Prostate gland (tissue), 2 donors: ENCODE measurements at regions of chrX and their contacts with region 1.

Region 1: DNA sequence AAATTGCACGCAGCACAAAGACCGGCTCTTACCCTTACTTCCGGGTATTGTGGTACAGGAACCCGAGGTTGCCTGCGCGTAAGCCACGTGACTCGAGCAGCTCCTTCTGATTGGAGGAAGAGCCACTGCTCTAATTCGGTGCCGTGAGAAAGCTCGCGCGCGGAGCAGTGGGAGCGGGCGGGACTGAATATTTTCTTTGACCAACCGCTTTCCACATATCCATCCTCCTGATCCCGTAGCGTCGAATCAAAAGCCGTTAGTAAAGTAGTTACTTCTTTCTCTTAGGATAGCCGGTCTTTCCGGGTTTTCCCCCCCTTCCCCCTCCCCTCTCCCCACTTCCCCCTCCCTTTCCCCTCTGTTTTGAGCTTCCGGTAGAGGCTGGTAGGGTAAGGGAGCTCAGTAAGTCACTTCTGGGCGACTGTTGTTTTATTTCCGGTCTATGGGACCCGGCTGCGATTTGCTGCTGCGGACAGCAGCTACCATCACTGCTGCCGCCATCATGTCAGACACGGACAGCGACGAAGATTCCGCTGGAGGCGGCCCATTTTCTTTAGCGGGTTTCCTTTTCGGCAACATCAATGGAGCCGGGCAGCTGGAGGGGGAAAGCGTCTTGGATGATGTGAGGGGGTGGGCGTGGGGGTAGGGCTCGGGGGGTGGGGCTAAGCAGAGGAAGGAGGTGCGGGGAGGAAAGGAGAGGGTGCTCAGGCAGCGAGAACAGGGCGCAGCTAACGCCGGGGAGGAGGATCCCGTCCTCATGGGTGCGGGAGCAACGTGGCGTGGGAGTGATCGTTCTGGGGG is at the start of gene TAF1:
- DNase-seq: peak; percentile 92
- H3K4me3 ChIP-seq: peak within 1 kb of the TSS; percentile 46 to 51
- H3K27ac ChIP-seq: peak within 1 kb of the TSS; percentile 77 to 79
- H3K4me1 ChIP-seq: no peaks in the 10 kb centered on the region
- H3K27me3 ChIP-seq: no peaks in the 10 kb centered on the region
- CTCF ChIP-seq: no peak
- POLR2A ChIP-seq: no peak
- total RNA-seq, gene TAF1: 27.1 to 67.9 TPM

Region 2: DNA sequence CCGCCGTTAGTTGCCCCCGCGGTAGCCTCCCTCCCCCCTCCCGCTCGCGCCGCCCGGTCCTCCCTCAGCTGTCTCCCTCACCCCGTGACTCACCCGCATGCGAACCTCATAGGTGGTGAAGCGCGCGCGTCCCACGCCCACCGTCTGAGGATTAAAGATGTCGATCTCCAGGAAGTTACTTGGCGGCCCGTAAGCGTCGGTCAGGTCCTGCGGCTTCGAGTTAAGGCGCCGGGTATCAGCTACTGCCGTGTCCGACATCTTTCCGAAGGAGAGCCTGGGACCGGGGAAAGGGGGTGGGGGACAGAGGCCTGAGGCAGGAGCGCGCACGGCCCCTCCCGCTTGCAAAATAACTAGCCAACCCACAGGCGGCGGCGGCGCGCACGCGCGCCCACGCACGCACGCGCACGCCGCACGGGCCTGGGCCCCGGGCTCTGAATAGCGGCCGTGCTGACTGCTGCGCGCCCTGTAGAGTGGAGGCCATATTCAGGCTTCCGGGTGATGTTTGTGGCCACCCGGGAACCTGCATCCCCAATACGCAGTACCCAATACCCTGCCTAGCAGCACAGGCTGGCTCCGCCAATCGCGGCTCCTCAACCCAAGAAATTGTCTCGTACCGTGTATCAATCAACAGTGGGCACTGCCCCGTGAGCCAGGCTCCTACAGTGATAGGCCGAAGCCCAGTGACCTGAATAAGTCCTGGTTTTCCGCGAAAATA is 297.9 kb before region 1 on chrX and contains the start of gene SNX12:
- intact Hi-C with region 1: no loop called
- DNase-seq: peak; percentile 89
- H3K4me3 ChIP-seq: peak within 1 kb of the TSS; percentile 44 to 52
- H3K27ac ChIP-seq: peak within 1 kb of the TSS; percentile 79 to 86
- H3K4me1 ChIP-seq: no peaks in the 10 kb centered on the region
- H3K27me3 ChIP-seq: no peaks in the 10 kb centered on the region
- CTCF ChIP-seq: peak in 2 of 4 experiments; percentile 67 to 91
- POLR2A ChIP-seq: peak; percentile 62
- total RNA-seq, gene SNX12: 54.5 to 65.5 TPM

Region 3: GRCh38 chrX:71254092-71254941 is 111.8 kb before region 1 on chrX and contains the start of gene ZMYM3:
- intact Hi-C with region 1: loop called (anchors 5 kb)
- DNase-seq: peak; percentile 71
- H3K4me3 ChIP-seq: peak within 1 kb of the TSS; percentile 51 to 56
- H3K27ac ChIP-seq: peak within 1 kb of the TSS; percentile 78 to 85
- H3K4me1 ChIP-seq: no peaks in the 10 kb centered on the region
- H3K27me3 ChIP-seq: no peaks in the 10 kb centered on the region
- CTCF ChIP-seq: peak in 2 of 4 experiments; percentile 1 to 7
- POLR2A ChIP-seq: peak; percentile 39
- total RNA-seq, gene ZMYM3: 23.2 to 71.6 TPM

Region 4: GRCh38 chrX:71283403-71284143 is 82.5 kb before region 1 on chrX and contains the start of gene NONO:
- intact Hi-C with region 1: loop called (anchors 10 kb)
- DNase-seq: peak; percentile 93
- H3K4me3 ChIP-seq: peak within 1 kb of the TSS; percentile 46 to 51
- H3K27ac ChIP-seq: peak within 1 kb of the TSS; percentile 85 to 88
- H3K4me1 ChIP-seq: no peaks in the 10 kb centered on the region
- H3K27me3 ChIP-seq: no peaks in the 10 kb centered on the region
- CTCF ChIP-seq: peak in 2 of 4 experiments; percentile 4 to 31
- POLR2A ChIP-seq: peak; percentile 74
- total RNA-seq, gene NONO: 266 to 287 TPM